CD4-positive, alpha-beta memory T cell (primary cell): ENCODE measurements at regions of chr16 and their contacts with region 1.

Region 1: GRCh38 chr16:30534368-30535105 is at the start of gene ZNF747:
- DNase-seq: peak; percentile 89 to 92 (median 90)
- H3K4me3 ChIP-seq: peak within 1 kb of the TSS; percentile 86 to 92
- H3K4me3 Mint-ChIP-seq: peak within 1 kb of the TSS; percentile 87 to 99 (median 93)
- H3K27ac ChIP-seq: peak within 1 kb of the TSS; percentile 91
- H3K27ac Mint-ChIP-seq: peak within 1 kb of the TSS; percentile 94 to 99 (median 97)
- H3K4me1 ChIP-seq: peaks cover 42% of the 10 kb centered on the region
- H3K4me1 Mint-ChIP-seq: peaks cover 15 to 51% (median 31%) of the 10 kb centered on the region in 4 donors
- H3K27me3 ChIP-seq: no peaks in the 10 kb centered on the region
- H3K27me3 Mint-ChIP-seq: no peaks in the 10 kb centered on the region
- total RNA-seq, gene ZNF747: 15.7 to 17.8 TPM

Region 2: GRCh38 chr16:30445408-30446202 is 88.9 kb before region 1 on chr16 and contains the start of gene SEPHS2:
- CTCF ChIA-PET with region 1: interaction called, 22 read pairs
- POLR2A ChIA-PET with region 1: interaction called, 7 read pairs
- intact Hi-C with region 1: loop called (anchors 2 kb)
- DNase-seq: peak; percentile 93 to 98 (median 94)
- H3K4me3 ChIP-seq: peak within 1 kb of the TSS; percentile 92 to 94
- H3K4me3 Mint-ChIP-seq: peak within 1 kb of the TSS; percentile 89 to 98 (median 96)
- H3K27ac ChIP-seq: peak within 1 kb of the TSS; percentile 96
- H3K27ac Mint-ChIP-seq: peak within 1 kb of the TSS; percentile 87 to 98 (median 96)
- H3K4me1 ChIP-seq: peaks cover 42% of the 10 kb centered on the region
- H3K4me1 Mint-ChIP-seq: peaks cover 24 to 44% (median 36%) of the 10 kb centered on the region in 4 donors
- H3K27me3 ChIP-seq: no peaks in the 10 kb centered on the region
- H3K27me3 Mint-ChIP-seq: no peaks in the 10 kb centered on the region
- total RNA-seq, gene SEPHS2: 42.0 to 44.4 TPM

Region 3: GRCh38 chr16:30519120-30520049 is 15.2 kb before region 1 on chr16:
- CTCF ChIA-PET with region 1: interaction called, 8 read pairs
- POLR2A ChIA-PET with region 1: interaction called, 41 read pairs
- intact Hi-C with region 1: no loop called
- DNase-seq: no peak
- H3K4me3 ChIP-seq: no peak overlapping the region
- H3K4me3 Mint-ChIP-seq: no peak overlapping the region
- H3K27ac ChIP-seq: no peak overlapping the region
- H3K27ac Mint-ChIP-seq: peak overlapping the region in 6 of 7 donors; percentile 2 to 63 (median 56)
- H3K4me1 ChIP-seq: no peaks in the 10 kb centered on the region
- H3K4me1 Mint-ChIP-seq: peaks cover 4 to 15% (median 7%) of the 10 kb centered on the region in 4 donors
- H3K27me3 ChIP-seq: no peaks in the 10 kb centered on the region
- H3K27me3 Mint-ChIP-seq: no peaks in the 10 kb centered on the region

Region 4: DNA sequence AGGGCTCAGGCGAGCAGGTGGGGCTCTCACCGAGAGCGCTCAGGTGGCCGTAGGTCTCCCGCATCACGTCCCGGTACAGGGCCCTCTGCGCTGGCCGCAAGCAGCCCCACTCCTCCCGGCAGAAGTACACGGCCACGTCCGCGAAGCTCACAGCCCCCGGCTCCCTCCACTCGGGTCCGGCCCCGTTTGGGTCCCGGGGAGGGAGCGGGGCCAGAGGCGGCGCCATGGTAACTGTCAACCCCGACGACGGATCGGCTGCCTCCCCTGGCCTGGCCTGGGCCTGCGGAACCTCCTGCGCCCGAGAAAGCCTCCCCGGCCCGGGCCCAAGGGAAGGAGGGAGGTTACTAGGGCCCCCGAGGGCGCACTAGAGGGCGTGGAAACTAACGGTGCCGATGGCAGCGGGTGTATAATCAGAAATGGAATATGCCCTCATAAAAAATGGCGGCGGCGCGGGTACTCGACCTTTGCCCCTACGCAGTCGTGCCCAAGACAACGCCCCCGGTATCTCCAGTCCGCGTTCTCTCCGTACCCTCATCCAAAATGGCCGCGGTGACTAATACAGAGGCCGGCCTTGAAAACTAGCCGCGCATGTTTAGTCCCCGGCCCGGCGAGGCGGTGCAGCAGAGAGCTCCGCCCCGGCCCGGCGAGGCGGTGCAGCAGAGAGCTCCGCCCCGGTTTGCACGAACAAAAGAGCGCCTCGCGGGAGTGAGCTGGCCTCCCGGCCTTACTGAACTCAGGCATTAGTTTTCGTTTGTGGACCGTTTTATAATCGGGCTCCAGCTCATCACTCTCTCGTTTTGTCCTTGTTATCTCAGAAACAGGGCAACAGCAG is 23.6 kb after region 1 on chr16 and contains the start of gene ZNF764:
- CTCF ChIA-PET with region 1: interaction called, 101 read pairs
- POLR2A ChIA-PET with region 1: interaction called, 457 read pairs
- intact Hi-C with region 1: loop called (anchors 1 kb)
- DNase-seq: peak; percentile 94 to 98 (median 96)
- H3K4me3 ChIP-seq: peak within 1 kb of the TSS; percentile 58 to 75
- H3K4me3 Mint-ChIP-seq: peak within 1 kb of the TSS; percentile 88 to 94 (median 92)
- H3K27ac ChIP-seq: peak within 1 kb of the TSS; percentile 95
- H3K27ac Mint-ChIP-seq: peak within 1 kb of the TSS; percentile 93 to 97 (median 95)
- H3K4me1 ChIP-seq: peaks cover 54% of the 10 kb centered on the region
- H3K4me1 Mint-ChIP-seq: peaks cover 19 to 55% (median 37%) of the 10 kb centered on the region in 4 donors
- H3K27me3 ChIP-seq: no peaks in the 10 kb centered on the region
- H3K27me3 Mint-ChIP-seq: no peaks in the 10 kb centered on the region
- total RNA-seq, gene ZNF764: 28.9 to 29.3 TPM

Region 5: DNA sequence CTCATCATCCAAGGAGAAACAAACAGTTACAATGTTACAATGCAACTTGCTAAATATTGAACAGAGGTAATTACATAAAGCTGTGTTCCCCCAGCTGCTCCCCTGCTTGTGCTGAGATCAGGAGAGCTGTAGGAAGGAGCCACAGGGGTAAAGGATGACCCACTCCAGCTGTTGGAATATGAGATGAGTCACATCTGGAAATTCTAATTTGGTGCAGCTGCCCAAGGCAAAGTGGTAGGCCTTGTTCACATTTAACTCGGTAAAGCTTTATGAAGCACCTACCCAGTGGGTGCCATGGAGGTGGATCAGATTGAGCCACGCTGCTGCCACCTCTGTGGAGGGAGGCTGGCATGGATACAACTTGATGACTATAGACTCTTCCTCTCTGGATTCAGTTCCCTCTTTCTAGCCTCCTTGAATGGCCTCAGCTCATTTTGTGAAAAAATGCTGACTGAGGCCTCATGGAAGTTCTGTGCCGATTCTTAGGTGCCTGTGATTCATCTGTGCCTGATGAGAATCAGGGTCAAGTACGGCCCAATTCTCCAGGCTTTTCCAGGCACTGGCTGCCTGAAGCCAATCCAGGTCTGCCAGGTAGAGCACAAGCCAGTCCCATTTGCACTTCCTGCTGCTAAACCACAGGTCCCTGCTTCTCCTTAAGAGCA is 68.2 kb after region 1 on chr16:
- CTCF ChIA-PET with region 1: interaction called, 10 read pairs
- POLR2A ChIA-PET with region 1: interaction called, 17 read pairs
- intact Hi-C with region 1: loop called (anchors 1 kb)
- DNase-seq: no peak
- H3K4me3 ChIP-seq: no peak overlapping the region
- H3K4me3 Mint-ChIP-seq: no peak overlapping the region
- H3K27ac ChIP-seq: no peak overlapping the region
- H3K27ac Mint-ChIP-seq: peak overlapping the region in 3 of 7 donors; percentile 23 to 52 (median 42)
- H3K4me1 ChIP-seq: peaks cover 3% of the 10 kb centered on the region
- H3K4me1 Mint-ChIP-seq: peaks cover 2 to 9% (median 5%) of the 10 kb centered on the region in 4 donors
- H3K27me3 ChIP-seq: no peaks in the 10 kb centered on the region
- H3K27me3 Mint-ChIP-seq: no peaks in the 10 kb centered on the region

Region 6: GRCh38 chr16:30650369-30651123 is 116.0 kb after region 1 on chr16 and contains the start of gene PRR14:
- CTCF ChIA-PET with region 1: interaction called, 8 read pairs
- POLR2A ChIA-PET with region 1: interaction called, 16 read pairs
- intact Hi-C with region 1: no loop called
- DNase-seq: peak; percentile 96 to 99 (median 97)
- H3K4me3 ChIP-seq: peak within 1 kb of the TSS; percentile 99
- H3K4me3 Mint-ChIP-seq: peak within 1 kb of the TSS; percentile 95 to 100 (median 99)
- H3K27ac ChIP-seq: peak within 1 kb of the TSS; percentile 96
- H3K27ac Mint-ChIP-seq: peak within 1 kb of the TSS; percentile 97 to 100 (median 99)
- H3K4me1 ChIP-seq: peaks cover 20% of the 10 kb centered on the region
- H3K4me1 Mint-ChIP-seq: peaks cover 11 to 32% (median 18%) of the 10 kb centered on the region in 4 donors
- H3K27me3 ChIP-seq: no peaks in the 10 kb centered on the region
- H3K27me3 Mint-ChIP-seq: peaks cover 0 to 2% of the 10 kb centered on the region in 2 donors
- total RNA-seq, gene PRR14: 92.0 to 100 TPM